ENCODE measurements at regions of chr4 and their contacts with region 1.

Region 1: GRCh38 chr4:165207431-165208220 is at the start of gene KLHL2:
- DNase-seq: no peak
- ATAC-seq: peak; percentile 80
- H3K4me3 ChIP-seq: peak within 1 kb of the TSS; percentile 90
- H3K27ac ChIP-seq: peak within 1 kb of the TSS; percentile 35
- H3K4me1 ChIP-seq: peaks cover 9% of the 10 kb centered on the region
- H3K27me3 ChIP-seq: no peaks in the 10 kb centered on the region
- CTCF ChIP-seq: no peak
- EP300 ChIP-seq: no peak
- POLR2A ChIP-seq: peak; percentile 57
- RAD21 ChIP-seq: no peak
- polyA plus RNA-seq, gene KLHL2: 8.6 TPM

Region 2: GRCh38 chr4:165106518-165106917 is 101.1 kb before region 1 on chr4:
- CTCF ChIA-PET with region 1: no interaction called
- POLR2A ChIA-PET with region 1: no interaction called
- RAD21 ChIA-PET with region 1: no interaction called
- SMC1A ChIA-PET with region 1: no interaction called
- in situ Hi-C with region 1: no loop called
- intact Hi-C with region 1: no loop called
- DNase-seq: no peak
- ATAC-seq: no peak
- H3K4me3 ChIP-seq: no peak overlapping the region
- H3K27ac ChIP-seq: no peak overlapping the region
- H3K4me1 ChIP-seq: no peaks in the 10 kb centered on the region
- H3K27me3 ChIP-seq: no peaks in the 10 kb centered on the region
- CTCF ChIP-seq: no peak
- EP300 ChIP-seq: no peak
- POLR2A ChIP-seq: no peak
- RAD21 ChIP-seq: no peak

Region 3: DNA sequence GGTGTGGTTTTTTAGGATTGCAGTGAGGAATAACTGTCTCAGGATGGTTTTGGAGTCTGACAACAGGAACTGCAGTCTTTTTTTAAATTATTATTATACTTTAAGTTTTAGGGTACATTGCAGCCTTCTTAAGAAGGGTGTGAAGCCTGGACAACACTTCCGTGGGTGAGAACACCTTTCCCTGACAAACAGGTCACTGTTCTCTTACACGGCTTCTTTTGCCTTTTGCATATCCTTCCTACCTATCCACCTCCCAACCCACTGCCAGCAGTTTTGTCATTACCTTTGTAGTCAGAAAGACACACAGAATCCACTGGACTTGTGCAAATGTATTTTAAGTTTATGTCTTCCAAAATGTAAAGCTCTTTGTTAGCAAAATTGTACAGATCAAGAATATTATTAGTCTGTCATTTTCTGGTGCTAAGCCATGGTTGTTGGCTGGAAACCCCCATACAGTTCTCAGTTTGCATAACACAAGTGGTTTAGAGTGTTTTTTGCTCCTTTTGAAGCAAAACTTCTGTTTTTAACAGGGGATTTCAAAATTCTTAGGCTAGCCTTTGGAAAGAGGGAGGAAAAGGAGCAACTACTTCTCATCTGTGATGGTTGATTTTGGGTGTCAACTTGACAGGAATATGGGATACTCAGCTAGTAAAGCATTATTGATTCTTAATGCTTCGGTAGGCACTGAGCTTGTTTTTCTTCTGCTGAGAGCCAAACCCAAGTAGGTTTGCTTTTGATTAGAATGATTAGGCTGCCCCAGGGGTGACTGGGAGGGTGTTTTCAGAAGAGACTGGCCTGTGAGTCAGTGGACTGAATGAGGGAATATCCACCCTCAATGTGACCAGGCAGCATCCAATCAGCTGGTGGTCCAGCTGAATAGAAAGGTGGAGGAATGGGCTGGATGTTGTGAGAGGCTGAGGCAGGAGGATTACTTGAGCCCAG is 29.6 kb before region 1 on chr4:
- CTCF ChIA-PET with region 1: interaction called, 4 read pairs
- POLR2A ChIA-PET with region 1: interaction called, 9 read pairs
- RAD21 ChIA-PET with region 1: interaction called, 7 read pairs
- SMC1A ChIA-PET with region 1: interaction called, 12 read pairs
- in situ Hi-C with region 1: no loop called
- intact Hi-C with region 1: no loop called
- DNase-seq: peak; percentile 11
- ATAC-seq: peak; percentile 94
- H3K4me3 ChIP-seq: no peak overlapping the region
- H3K27ac ChIP-seq: peak overlapping the region; percentile 42
- H3K4me1 ChIP-seq: peaks cover 4% of the 10 kb centered on the region
- H3K27me3 ChIP-seq: no peaks in the 10 kb centered on the region
- CTCF ChIP-seq: no peak
- EP300 ChIP-seq: no peak; a peak in 1 of 4 replicates
- POLR2A ChIP-seq: no peak
- RAD21 ChIP-seq: no peak

Measured in GM12878 (cell line).